ENCODE measurements at regions of chr11 and their contacts with region 1.

Region 1: GRCh38 chr11:73047773-73048371 is 94.2 kb downstream of the FCHSD2 start:
- DNase-seq: no peak
- ATAC-seq: no peak
- H3K4me3 ChIP-seq: no peak overlapping the region
- H3K27ac ChIP-seq: no peak overlapping the region
- H3K4me1 ChIP-seq: no peaks in the 10 kb centered on the region
- H3K27me3 ChIP-seq: no peaks in the 10 kb centered on the region
- CTCF ChIP-seq: no peak
- POLR2A ChIP-seq: no peak
- RAD21 ChIP-seq: no peak

Region 2: DNA sequence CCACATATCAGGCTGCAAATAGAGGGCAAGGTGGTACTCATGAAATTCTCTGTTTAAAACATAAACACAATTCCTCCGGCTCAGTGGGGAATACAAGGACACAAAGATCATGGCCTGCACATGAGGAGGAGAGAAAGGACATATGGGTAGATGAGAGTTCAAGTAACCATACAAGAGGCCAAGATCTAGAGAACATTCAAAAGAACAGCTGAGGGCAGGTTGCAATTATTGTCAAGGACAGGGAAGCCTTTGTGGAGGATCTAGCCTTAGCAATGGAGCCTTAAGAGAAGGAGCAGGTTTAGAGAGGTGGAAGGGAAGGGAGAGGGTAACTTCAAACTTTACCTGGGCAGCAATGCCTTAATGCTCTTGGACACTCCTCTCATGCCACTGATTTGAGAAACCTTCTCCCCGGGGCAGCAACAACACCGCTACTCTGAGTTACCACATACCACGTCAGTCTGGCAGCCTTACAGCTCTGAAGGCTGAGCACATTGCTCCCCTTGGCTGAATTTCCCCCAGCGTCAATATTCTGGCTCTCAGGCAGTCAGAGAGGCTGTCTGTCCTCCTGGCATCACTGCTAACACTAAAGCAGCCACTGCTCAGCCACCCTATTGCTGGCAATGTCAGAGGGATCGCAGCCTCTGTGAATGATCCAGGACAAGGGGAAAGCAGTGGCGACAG is 669.0 kb before region 1 on chr11:
- CTCF ChIA-PET with region 1: no interaction called
- POLR2A ChIA-PET with region 1: no interaction called
- RAD21 ChIA-PET with region 1: no interaction called
- intact Hi-C with region 1: no loop called
- DNase-seq: no peak
- ATAC-seq: no peak
- H3K4me3 ChIP-seq: no peak overlapping the region
- H3K27ac ChIP-seq: no peak overlapping the region
- H3K4me1 ChIP-seq: no peaks in the 10 kb centered on the region
- H3K27me3 ChIP-seq: no peaks in the 10 kb centered on the region
- CTCF ChIP-seq: no peak
- POLR2A ChIP-seq: no peak
- RAD21 ChIP-seq: no peak

Region 3: GRCh38 chr11:72996959-72997358 is 50.9 kb before region 1 on chr11:
- CTCF ChIA-PET with region 1: no interaction called
- POLR2A ChIA-PET with region 1: no interaction called
- RAD21 ChIA-PET with region 1: no interaction called
- intact Hi-C with region 1: loop called (anchors 5 kb)
- DNase-seq: no peak
- ATAC-seq: no peak
- H3K4me3 ChIP-seq: no peak overlapping the region
- H3K27ac ChIP-seq: no peak overlapping the region
- H3K4me1 ChIP-seq: no peaks in the 10 kb centered on the region
- H3K27me3 ChIP-seq: no peaks in the 10 kb centered on the region
- CTCF ChIP-seq: no peak
- POLR2A ChIP-seq: no peak
- RAD21 ChIP-seq: no peak

Measured in HCT116 (cell line).